ENCODE measurements at regions of chr17 and their contacts with region 1.

Region 1: DNA sequence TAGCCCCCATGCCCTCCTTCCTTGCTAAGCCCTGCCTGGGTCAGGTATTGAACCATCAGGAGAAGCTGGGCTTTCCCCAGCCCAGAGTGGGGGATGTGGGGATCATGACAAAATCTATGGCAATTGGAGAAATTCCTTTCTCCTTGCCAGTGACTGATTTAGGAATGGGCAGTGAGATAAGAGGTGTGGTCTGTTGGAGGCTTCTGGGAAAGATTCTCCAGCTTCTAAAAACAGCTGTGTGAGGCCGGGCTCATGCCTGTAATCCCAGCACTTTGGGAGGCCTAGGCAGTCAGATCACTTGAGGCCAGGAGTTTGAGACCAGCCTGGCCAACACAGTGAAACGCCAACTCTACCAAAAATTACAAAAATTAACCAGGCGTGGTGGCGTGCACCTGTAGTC is 69.1 kb downstream of the SRCIN1 start:
- DNase-seq: no peak
- H3K4me3 ChIP-seq: no peak overlapping the region
- CTCF ChIP-seq: no peak

Region 2: DNA sequence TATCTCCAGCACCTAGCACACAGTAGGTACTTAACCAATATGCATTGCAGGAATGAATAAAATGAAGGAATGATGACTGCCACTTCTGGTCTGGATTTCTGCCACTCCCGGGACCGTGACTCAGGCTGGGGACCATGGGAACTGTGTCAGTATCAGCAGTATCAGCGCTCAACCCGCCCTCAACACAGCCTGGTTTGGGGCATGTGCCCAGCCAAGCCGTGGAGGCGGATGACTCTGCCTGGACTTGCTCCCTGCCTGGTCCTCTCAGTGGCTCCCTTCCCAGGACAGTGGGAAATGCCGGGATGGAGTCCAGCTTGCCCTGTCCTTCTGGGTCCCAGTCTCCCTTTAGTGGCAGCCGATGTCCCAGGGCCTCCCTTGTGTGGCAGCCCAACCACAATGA is 14.0 kb after region 1 on chr17:
- CTCF ChIA-PET with region 1: interaction called, 202 read pairs
- POLR2A ChIA-PET with region 1: no interaction called
- DNase-seq: no peak
- H3K4me3 ChIP-seq: no peak overlapping the region
- CTCF ChIP-seq: no peak